T-cell (primary cell): ENCODE measurements at regions of chr5 and their contacts with region 1.

Region 1: DNA sequence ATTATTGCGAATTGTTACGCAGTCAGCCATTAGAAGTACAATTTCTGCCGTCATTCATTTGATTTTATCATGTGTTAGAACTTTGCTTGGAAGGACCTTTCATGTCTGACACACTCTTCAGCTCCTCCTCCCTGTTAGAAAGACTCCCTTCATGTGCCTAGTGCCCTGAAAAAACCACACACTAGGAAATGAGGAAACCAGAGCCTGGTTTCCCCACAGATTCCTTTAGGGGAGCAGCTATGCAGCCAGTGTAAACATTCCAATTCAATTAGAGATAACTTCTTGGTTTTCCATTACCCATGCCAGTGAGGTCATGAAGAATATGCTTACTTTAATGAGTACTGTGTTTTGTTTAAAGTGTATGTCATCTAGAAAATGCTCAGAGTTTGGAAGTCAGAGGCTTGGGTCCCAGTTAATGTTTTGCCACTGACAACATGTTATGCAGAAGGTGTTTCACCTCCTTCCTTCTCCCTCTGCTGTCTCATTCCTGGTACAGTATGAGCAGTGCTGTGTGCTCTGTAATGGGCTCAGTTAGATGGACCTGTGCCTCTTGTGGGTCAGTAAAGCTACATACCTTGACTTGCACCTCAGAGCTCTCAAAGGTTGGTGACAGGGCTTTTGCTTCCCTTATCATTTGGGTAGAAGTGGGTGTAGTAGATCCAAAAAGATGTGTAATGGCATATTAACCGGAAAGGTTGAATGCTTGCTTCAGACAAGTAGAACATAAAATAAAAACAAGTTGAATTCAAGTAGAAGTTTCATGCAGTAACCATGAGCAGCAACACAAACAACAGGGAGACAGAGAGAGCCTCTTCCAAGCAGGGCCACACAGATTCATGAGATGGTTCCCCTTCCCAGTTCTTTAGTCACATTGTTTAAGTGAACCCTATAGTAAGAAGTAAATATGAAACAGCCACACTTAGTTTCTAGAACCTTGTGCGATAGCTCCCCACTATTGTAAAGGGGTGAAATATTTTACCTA is 52.6 kb upstream of the TNFAIP8 start:
- DNase-seq: peak in 1 of 35 experiments; percentile 53
- ATAC-seq: peak; percentile 25 to 78 (median 40)
- H3K4me3 ChIP-seq: peak overlapping the region in 1 of 2 donors; percentile 44
- H3K4me3 Mint-ChIP-seq: peak overlapping the region; percentile 25 to 91 (median 63)
- H3K27ac ChIP-seq: peak overlapping the region; percentile 40
- H3K27ac Mint-ChIP-seq: peak overlapping the region; percentile 95 to 96
- H3K4me1 ChIP-seq: peaks cover 68 to 77% of the 10 kb centered on the region in 2 experiments
- H3K4me1 Mint-ChIP-seq: peaks cover 92 to 96% (median 93%) of the 10 kb centered on the region in 3 donors
- H3K27me3 ChIP-seq: no peaks in the 10 kb centered on the region
- H3K27me3 Mint-ChIP-seq: no peaks in the 10 kb centered on the region

Region 2: DNA sequence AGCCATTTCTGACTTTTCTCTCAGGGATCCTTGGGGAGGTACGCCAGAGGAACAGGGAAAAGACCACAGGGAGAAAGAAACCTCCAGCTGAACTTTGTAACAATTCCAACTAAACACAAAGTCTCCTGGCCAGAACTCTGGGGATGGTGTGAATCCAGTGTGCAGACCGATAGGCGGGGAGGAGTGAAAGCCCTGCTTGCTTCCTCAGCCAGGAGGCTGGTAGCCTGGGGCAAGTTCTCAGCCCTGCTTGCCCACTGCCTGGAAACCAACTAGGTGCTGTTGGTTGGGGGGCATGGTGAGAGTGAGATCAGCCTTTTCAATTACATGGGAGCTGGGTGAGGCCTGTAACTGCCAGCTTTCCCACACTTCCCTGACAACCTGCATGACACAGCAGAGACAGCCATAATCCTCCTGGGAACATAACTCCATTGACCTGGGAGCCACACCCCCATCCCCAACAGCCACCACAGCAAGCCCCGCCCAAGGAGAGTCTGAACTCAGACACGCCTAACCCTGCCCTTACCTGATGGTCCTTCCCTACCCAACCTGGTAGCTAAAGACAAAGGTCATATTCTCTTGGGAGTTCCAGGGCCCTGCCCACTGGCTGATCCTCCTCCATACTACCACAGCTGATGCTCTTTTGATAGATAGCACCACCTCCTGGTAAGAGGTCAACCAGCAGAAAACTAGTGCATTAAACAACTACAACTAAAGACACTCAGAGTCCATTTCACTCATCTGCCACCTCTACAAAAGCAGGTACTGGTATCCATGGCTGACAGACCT is 47.4 kb before region 1 on chr5:
- CTCF ChIA-PET with region 1: interaction called in 1 of 2 experiments, 3 read pairs
- POLR2A ChIA-PET with region 1: interaction called in 1 of 2 experiments, 11 read pairs
- DNase-seq: peak in 1 of 35 experiments; percentile 28
- ATAC-seq: no peak
- H3K4me3 ChIP-seq: no peak overlapping the region
- H3K4me3 Mint-ChIP-seq: no peak overlapping the region
- H3K27ac ChIP-seq: no peak overlapping the region
- H3K27ac Mint-ChIP-seq: no peak overlapping the region
- H3K4me1 ChIP-seq: no peaks in the 10 kb centered on the region
- H3K4me1 Mint-ChIP-seq: no peaks in the 10 kb centered on the region
- H3K27me3 ChIP-seq: no peaks in the 10 kb centered on the region
- H3K27me3 Mint-ChIP-seq: no peaks in the 10 kb centered on the region

Region 3: GRCh38 chr5:119274767-119275130 is 28.5 kb before region 1 on chr5:
- CTCF ChIA-PET with region 1: interaction called in 1 of 2 experiments, 11 read pairs
- POLR2A ChIA-PET with region 1: interaction called in 1 of 2 experiments, 7 read pairs
- DNase-seq: peak in 1 of 35 experiments; percentile 67
- ATAC-seq: peak; percentile 29 to 56 (median 52)
- H3K4me3 ChIP-seq: no peak overlapping the region
- H3K4me3 Mint-ChIP-seq: peak overlapping the region; percentile 64 to 100 (median 98)
- H3K27ac ChIP-seq: peak overlapping the region; percentile 82
- H3K27ac Mint-ChIP-seq: peak overlapping the region; percentile 97 to 99
- H3K4me1 ChIP-seq: peaks cover 80 to 83% of the 10 kb centered on the region in 2 experiments
- H3K4me1 Mint-ChIP-seq: peaks cover 90 to 98% (median 98%) of the 10 kb centered on the region in 3 donors
- H3K27me3 ChIP-seq: no peaks in the 10 kb centered on the region
- H3K27me3 Mint-ChIP-seq: peaks cover 0 to 2% of the 10 kb centered on the region in 2 donors

Region 4: GRCh38 chr5:119290161-119290569 is 13.0 kb before region 1 on chr5:
- CTCF ChIA-PET with region 1: interaction called, 4 to 11 read pairs
- POLR2A ChIA-PET with region 1: interaction called, 3 read pairs
- DNase-seq: peak in 1 of 35 experiments; percentile 58
- ATAC-seq: peak; percentile 43 to 56 (median 50)
- H3K4me3 ChIP-seq: peak overlapping the region; percentile 15 to 40
- H3K4me3 Mint-ChIP-seq: peak overlapping the region; percentile 75 to 100 (median 78)
- H3K27ac ChIP-seq: peak overlapping the region; percentile 92
- H3K27ac Mint-ChIP-seq: peak overlapping the region; percentile 94 to 96
- H3K4me1 ChIP-seq: peaks cover 40 to 77% of the 10 kb centered on the region in 2 experiments
- H3K4me1 Mint-ChIP-seq: peaks cover 82 to 90% (median 87%) of the 10 kb centered on the region in 3 donors
- H3K27me3 ChIP-seq: no peaks in the 10 kb centered on the region
- H3K27me3 Mint-ChIP-seq: no peaks in the 10 kb centered on the region